Activated CD8-positive, alpha-beta T cell treated with anti-CD3 and anti-CD28 coated beads for 36 hours (primary cell): ENCODE measurements at regions of chr12 and their contacts with region 1.

Region 1: GRCh38 chr12:57088459-57089248 is at the start of gene NAB2:
- DNase-seq: peak; percentile 93
- ATAC-seq: peak; percentile 45
- H3K4me3 Mint-ChIP-seq: peak within 1 kb of the TSS; percentile 90
- H3K27ac Mint-ChIP-seq: peak within 1 kb of the TSS; percentile 97
- H3K4me1 Mint-ChIP-seq: peaks cover 53% of the 10 kb centered on the region
- H3K27me3 Mint-ChIP-seq: no peaks in the 10 kb centered on the region
- CTCF ChIP-seq: no peak
- total RNA-seq, gene NAB2: 69.3 to 70.8 TPM

Region 2: GRCh38 chr12:56941299-56942017 is 147.2 kb before region 1 on chr12:
- CTCF ChIA-PET with region 1: no interaction called
- POLR2A ChIA-PET with region 1: no interaction called
- intact Hi-C with region 1: no loop called
- DNase-seq: no peak
- ATAC-seq: peak; percentile 64
- H3K4me3 Mint-ChIP-seq: no peak overlapping the region
- H3K27ac Mint-ChIP-seq: no peak overlapping the region
- H3K4me1 Mint-ChIP-seq: no peaks in the 10 kb centered on the region
- H3K27me3 Mint-ChIP-seq: peaks cover 8% of the 10 kb centered on the region
- CTCF ChIP-seq: no peak

Region 3: GRCh38 chr12:56979628-56980027 is 109.0 kb before region 1 on chr12:
- CTCF ChIA-PET with region 1: no interaction called
- POLR2A ChIA-PET with region 1: no interaction called
- intact Hi-C with region 1: no loop called
- DNase-seq: no peak
- ATAC-seq: no peak
- H3K4me3 Mint-ChIP-seq: no peak overlapping the region
- H3K27ac Mint-ChIP-seq: no peak overlapping the region
- H3K4me1 Mint-ChIP-seq: no peaks in the 10 kb centered on the region
- H3K27me3 Mint-ChIP-seq: no peaks in the 10 kb centered on the region
- CTCF ChIP-seq: no peak

Region 4: GRCh38 chr12:57069523-57069922 is 19.1 kb before region 1 on chr12:
- CTCF ChIA-PET with region 1: interaction called, 193 read pairs
- POLR2A ChIA-PET with region 1: interaction called, 155 read pairs
- intact Hi-C with region 1: loop called (anchors 1 kb)
- DNase-seq: peak; percentile 79
- ATAC-seq: peak; percentile 90
- H3K4me3 Mint-ChIP-seq: peak overlapping the region; percentile 62
- H3K27ac Mint-ChIP-seq: peak overlapping the region; percentile 90
- H3K4me1 Mint-ChIP-seq: peaks cover 71% of the 10 kb centered on the region
- H3K27me3 Mint-ChIP-seq: no peaks in the 10 kb centered on the region
- CTCF ChIP-seq: peak; percentile 86

Region 5: DNA sequence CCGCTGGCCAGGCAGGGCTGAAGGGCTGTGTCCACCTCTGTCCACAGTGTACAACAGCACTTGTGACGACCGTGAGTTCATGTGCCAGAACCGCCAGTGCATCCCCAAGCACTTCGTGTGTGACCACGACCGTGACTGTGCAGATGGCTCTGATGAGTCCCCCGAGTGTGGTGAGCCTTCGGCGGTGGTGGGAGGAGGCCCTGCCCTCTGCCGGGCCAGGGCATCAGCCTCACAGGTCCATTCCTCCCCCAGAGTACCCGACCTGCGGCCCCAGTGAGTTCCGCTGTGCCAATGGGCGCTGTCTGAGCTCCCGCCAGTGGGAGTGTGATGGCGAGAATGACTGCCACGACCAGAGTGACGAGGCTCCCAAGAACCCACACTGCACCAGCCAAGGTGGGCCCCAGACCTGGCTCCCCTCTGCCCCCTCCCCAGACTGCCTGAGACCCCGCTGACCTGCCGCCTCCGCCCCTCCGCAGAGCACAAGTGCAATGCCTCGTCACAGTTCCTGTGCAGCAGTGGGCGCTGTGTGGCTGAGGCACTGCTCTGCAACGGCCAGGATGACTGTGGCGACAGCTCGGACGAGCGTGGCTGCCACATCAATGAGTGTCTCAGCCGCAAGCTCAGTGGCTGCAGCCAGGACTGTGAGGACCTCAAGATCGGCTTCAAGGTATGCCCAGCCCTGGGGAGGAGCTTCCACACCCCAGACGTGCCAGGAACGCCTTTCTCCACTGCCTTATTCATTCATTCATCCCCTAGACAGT is 107.1 kb after region 1 on chr12:
- CTCF ChIA-PET with region 1: no interaction called
- POLR2A ChIA-PET with region 1: no interaction called
- intact Hi-C with region 1: no loop called
- DNase-seq: no peak
- ATAC-seq: peak; percentile 19
- H3K4me3 Mint-ChIP-seq: no peak overlapping the region
- H3K27ac Mint-ChIP-seq: no peak overlapping the region
- H3K4me1 Mint-ChIP-seq: no peaks in the 10 kb centered on the region
- H3K27me3 Mint-ChIP-seq: no peaks in the 10 kb centered on the region
- CTCF ChIP-seq: no peak

Region 6: GRCh38 chr12:57476162-57476992 is 387.7 kb after region 1 on chr12:
- CTCF ChIA-PET with region 1: no interaction called
- POLR2A ChIA-PET with region 1: no interaction called
- intact Hi-C with region 1: no loop called
- DNase-seq: peak; percentile 93
- ATAC-seq: peak; percentile 67
- H3K4me3 Mint-ChIP-seq: peak overlapping the region; percentile 89
- H3K27ac Mint-ChIP-seq: peak overlapping the region; percentile 99
- H3K4me1 Mint-ChIP-seq: peaks cover 58% of the 10 kb centered on the region
- H3K27me3 Mint-ChIP-seq: no peaks in the 10 kb centered on the region
- CTCF ChIP-seq: peak; percentile 95